Natural killer cell (primary cell): ENCODE measurements at regions of chr1 and their contacts with region 1.

Region 1: GRCh38 chr1:58783993-58784757 is at the start of gene JUN:
- DNase-seq: peak; percentile 98 to 99
- ATAC-seq: peak; percentile 66 to 86 (median 69)
- H3K4me3 ChIP-seq: peak within 1 kb of the TSS; percentile 97
- H3K4me3 Mint-ChIP-seq: peak within 1 kb of the TSS; percentile 92
- H3K27ac ChIP-seq: peak within 1 kb of the TSS; percentile 98
- H3K27ac Mint-ChIP-seq: peak within 1 kb of the TSS; percentile 96 to 99
- H3K4me1 ChIP-seq: peaks cover 25% of the 10 kb centered on the region
- H3K4me1 Mint-ChIP-seq: peaks cover 47 to 61% of the 10 kb centered on the region in 2 donors
- H3K27me3 ChIP-seq: no peaks in the 10 kb centered on the region
- H3K27me3 Mint-ChIP-seq: peaks cover 0 to 9% of the 10 kb centered on the region in 2 donors
- CTCF ChIP-seq: no peak
- total RNA-seq, gene JUN: 1,209 to 1,942 (median 1,808) TPM

Region 2: DNA sequence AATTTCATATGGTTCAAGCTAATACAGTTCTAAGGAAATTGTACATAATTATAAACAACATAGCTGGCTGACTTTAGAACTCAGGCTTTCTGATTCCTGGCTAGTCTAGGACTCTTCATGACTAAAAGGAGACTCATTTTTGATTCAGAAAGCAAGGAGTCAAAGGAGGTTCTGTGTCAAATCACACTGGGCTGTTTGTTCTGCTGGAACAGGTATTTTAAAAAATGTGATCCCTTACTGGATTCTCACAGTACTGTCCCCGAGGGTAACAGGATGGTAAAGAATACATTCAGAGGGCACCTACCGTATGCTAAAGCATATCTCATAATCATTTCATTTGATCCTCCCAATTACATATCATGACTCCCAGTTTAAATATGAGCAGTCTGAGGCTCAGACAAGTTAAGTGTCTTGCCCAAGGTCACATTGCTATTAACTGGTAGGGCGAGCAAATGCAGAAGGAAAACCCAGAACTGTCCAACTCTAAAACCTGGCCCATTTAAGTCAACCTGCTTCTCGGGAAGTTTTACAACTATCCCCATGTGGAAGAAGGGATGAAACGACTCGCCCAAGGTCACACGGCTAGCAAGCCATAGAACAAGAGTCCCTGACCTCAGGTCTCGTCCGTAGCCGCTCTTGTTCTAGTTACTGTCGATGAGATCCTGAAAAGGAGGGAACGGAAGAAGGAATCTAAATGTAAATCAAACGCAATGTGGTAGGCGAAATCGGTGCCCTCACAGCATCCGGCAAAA is 85.0 kb before region 1 on chr1:
- intact Hi-C with region 1: loop called (anchors 1 kb)
- DNase-seq: peak in 1 of 2 donors; percentile 10
- ATAC-seq: peak; percentile 5 to 21 (median 8)
- H3K4me3 ChIP-seq: peak overlapping the region; percentile 89
- H3K4me3 Mint-ChIP-seq: peak overlapping the region; percentile 96
- H3K27ac ChIP-seq: peak overlapping the region; percentile 88
- H3K27ac Mint-ChIP-seq: peak overlapping the region; percentile 89 to 99
- H3K4me1 ChIP-seq: peaks cover 5% of the 10 kb centered on the region
- H3K4me1 Mint-ChIP-seq: peaks cover 0 to 17% of the 10 kb centered on the region in 2 donors
- H3K27me3 ChIP-seq: no peaks in the 10 kb centered on the region
- H3K27me3 Mint-ChIP-seq: no peaks in the 10 kb centered on the region
- CTCF ChIP-seq: no peak

Region 3: GRCh38 chr1:58816072-58816746 is 32.0 kb after region 1 on chr1:
- intact Hi-C with region 1: loop called (anchors 1 kb)
- DNase-seq: peak; percentile 83 to 88
- ATAC-seq: peak; percentile 80 to 89 (median 81)
- H3K4me3 ChIP-seq: peak overlapping the region; percentile 90
- H3K4me3 Mint-ChIP-seq: peak overlapping the region; percentile 92
- H3K27ac ChIP-seq: peak overlapping the region; percentile 88
- H3K27ac Mint-ChIP-seq: peak overlapping the region; percentile 88
- H3K4me1 ChIP-seq: peaks cover 47% of the 10 kb centered on the region
- H3K4me1 Mint-ChIP-seq: peaks cover 49 to 61% of the 10 kb centered on the region in 2 donors
- H3K27me3 ChIP-seq: no peaks in the 10 kb centered on the region
- H3K27me3 Mint-ChIP-seq: peaks cover 0 to 1% of the 10 kb centered on the region in 2 donors
- CTCF ChIP-seq: no peak

Region 4: DNA sequence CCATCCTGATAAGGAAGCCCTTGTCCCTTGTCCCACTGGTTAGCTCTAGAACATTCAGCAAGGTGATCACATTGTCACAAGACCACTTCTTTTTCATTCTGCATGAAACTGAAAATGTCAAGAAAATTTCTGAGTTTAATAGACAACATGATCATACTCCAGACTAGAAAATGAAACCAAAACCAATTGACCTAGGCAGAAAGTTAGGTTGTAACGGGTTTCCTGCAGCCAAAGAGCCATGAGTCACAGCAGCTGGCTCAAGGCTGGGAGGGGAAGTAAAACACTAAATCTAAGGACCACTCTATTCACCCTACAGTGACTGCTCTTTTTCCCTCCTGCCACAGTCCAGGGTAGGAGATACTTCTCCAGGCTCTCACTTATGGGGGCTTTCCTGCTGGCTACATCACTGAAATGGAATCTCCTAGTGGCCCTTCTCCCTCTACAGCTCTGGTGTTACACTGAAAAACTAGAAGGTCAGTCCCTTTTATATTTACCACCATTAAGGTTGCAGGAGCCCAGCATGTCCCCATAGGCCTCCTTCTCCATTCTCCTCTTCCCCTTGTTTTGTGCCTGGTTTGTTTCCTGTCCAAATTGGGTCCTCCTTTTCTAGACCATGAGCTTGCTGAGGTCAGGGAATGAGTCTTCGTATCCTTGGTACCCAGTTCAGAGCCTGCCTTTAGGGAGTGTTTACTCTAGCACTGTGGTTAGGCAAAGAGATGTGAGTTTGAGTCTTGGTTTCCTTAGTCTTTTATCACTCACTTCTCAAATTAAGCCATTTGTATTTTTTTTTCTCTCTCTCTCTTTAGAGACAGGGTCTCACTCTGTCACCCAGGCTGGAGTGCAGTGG is 236.2 kb after region 1 on chr1:
- intact Hi-C with region 1: loop called (anchors 1 kb)
- DNase-seq: peak; percentile 39 to 77
- ATAC-seq: peak; percentile 84 to 94 (median 87)
- H3K4me3 ChIP-seq: peak overlapping the region; percentile 5
- H3K4me3 Mint-ChIP-seq: peak overlapping the region; percentile 85
- H3K27ac ChIP-seq: peak overlapping the region; percentile 75
- H3K27ac Mint-ChIP-seq: peak overlapping the region; percentile 90 to 93
- H3K4me1 ChIP-seq: peaks cover 29% of the 10 kb centered on the region
- H3K4me1 Mint-ChIP-seq: peaks cover 37 to 40% of the 10 kb centered on the region in 2 donors
- H3K27me3 ChIP-seq: no peaks in the 10 kb centered on the region
- H3K27me3 Mint-ChIP-seq: peaks cover 5 to 8% of the 10 kb centered on the region in 2 donors
- CTCF ChIP-seq: no peak

Region 5: GRCh38 chr1:59146651-59147358 is 362.6 kb after region 1 on chr1:
- intact Hi-C with region 1: loop called (anchors 2 kb)
- DNase-seq: peak; percentile 68 to 72
- ATAC-seq: peak; percentile 85 to 90 (median 86)
- H3K4me3 ChIP-seq: peak overlapping the region; percentile 54
- H3K4me3 Mint-ChIP-seq: peak overlapping the region; percentile 87
- H3K27ac ChIP-seq: peak overlapping the region; percentile 59
- H3K27ac Mint-ChIP-seq: peak overlapping the region; percentile 82 to 85
- H3K4me1 ChIP-seq: peaks cover 14% of the 10 kb centered on the region
- H3K4me1 Mint-ChIP-seq: peaks cover 21 to 28% of the 10 kb centered on the region in 2 donors
- H3K27me3 ChIP-seq: no peaks in the 10 kb centered on the region
- H3K27me3 Mint-ChIP-seq: no peaks in the 10 kb centered on the region
- CTCF ChIP-seq: peak; percentile 7